Mammary epithelial cell (primary cell): ENCODE measurements at regions of chr17 and their contacts with region 1.

Region 1: DNA sequence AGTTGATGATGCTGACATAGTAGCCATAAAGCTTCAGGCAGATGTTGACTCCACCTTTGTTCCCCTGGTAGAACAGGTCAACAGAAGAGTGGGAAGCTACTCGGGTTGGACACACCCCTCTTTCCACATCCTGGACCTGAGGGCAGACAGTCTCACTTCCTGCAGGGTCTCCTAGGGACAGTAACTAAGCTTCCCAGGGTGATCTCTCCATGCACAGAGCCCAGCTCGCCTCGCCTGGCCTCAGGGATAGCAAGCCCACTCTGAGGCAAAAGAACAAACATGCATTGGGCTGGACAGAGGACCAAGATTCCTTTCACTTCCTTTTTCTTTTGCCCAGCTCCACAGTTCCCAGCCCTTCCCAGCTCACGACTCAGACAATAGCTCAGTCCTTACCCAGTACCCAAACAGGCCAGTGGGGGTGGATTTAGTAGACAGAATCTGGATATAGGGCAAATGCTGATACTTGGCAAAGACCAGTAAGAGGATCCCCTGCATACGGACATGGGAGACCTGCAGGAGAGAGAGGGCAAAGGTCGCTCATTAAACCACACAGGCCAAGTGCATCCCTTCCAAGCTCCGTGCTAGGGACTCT is 7.0 kb downstream of the INPP5K start:
- DNase-seq: no peak
- H3K4me3 ChIP-seq: no peak overlapping the region
- H3K27ac ChIP-seq: no peak overlapping the region
- H3K4me1 ChIP-seq: peaks cover 30% of the 10 kb centered on the region
- H3K27me3 ChIP-seq: no peaks in the 10 kb centered on the region
- CTCF ChIP-seq: no peak

Region 2: GRCh38 chr17:1298606-1299005 is 210.8 kb before region 1 on chr17:
- CTCF ChIA-PET with region 1: no interaction called
- dilution Hi-C with region 1: loop called (anchors 5 kb)
- in situ Hi-C with region 1: no loop called
- intact Hi-C with region 1: no loop called
- DNase-seq: no peak
- H3K4me3 ChIP-seq: no peak overlapping the region
- H3K27ac ChIP-seq: no peak overlapping the region
- H3K4me1 ChIP-seq: no peaks in the 10 kb centered on the region
- H3K27me3 ChIP-seq: peaks cover 13% of the 10 kb centered on the region
- CTCF ChIP-seq: no peak

Region 3: GRCh38 chr17:1379930-1380313 is 129.5 kb before region 1 on chr17:
- CTCF ChIA-PET with region 1: no interaction called
- dilution Hi-C with region 1: loop called (anchors 5 kb)
- in situ Hi-C with region 1: no loop called
- intact Hi-C with region 1: no loop called
- DNase-seq: peak; percentile 43
- H3K4me3 ChIP-seq: no peak overlapping the region
- H3K27ac ChIP-seq: no peak overlapping the region
- H3K4me1 ChIP-seq: peaks cover 6% of the 10 kb centered on the region
- H3K27me3 ChIP-seq: no peaks in the 10 kb centered on the region
- CTCF ChIP-seq: no peak

Region 4: DNA sequence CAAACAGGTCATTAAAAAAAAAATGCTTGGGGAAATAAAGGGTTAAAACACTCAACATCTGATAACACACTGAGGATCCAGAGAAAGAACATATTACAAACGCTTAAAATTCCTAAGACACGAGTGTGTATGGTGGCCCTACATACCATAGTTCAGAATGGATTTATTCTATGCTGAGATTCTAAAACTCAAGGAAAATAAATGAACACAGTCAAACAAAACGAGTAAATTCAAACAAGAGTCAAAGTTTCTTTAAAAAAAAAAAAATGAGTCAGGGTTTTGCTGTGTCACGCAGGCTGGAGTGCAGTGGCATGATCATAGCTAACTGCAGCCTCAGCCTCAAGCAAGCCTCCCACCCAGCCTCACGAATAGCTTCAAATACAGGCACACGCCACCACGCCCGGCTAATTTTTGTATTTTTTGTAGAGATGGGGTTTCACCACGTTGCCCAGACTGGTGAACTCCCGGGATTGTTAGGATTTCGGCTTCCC is 70.7 kb before region 1 on chr17:
- CTCF ChIA-PET with region 1: no interaction called
- dilution Hi-C with region 1: loop called (anchors 5 kb)
- in situ Hi-C with region 1: no loop called
- intact Hi-C with region 1: no loop called
- DNase-seq: no peak
- H3K4me3 ChIP-seq: no peak overlapping the region
- H3K27ac ChIP-seq: no peak overlapping the region
- H3K4me1 ChIP-seq: no peaks in the 10 kb centered on the region
- H3K27me3 ChIP-seq: no peaks in the 10 kb centered on the region
- CTCF ChIP-seq: no peak

Region 5: DNA sequence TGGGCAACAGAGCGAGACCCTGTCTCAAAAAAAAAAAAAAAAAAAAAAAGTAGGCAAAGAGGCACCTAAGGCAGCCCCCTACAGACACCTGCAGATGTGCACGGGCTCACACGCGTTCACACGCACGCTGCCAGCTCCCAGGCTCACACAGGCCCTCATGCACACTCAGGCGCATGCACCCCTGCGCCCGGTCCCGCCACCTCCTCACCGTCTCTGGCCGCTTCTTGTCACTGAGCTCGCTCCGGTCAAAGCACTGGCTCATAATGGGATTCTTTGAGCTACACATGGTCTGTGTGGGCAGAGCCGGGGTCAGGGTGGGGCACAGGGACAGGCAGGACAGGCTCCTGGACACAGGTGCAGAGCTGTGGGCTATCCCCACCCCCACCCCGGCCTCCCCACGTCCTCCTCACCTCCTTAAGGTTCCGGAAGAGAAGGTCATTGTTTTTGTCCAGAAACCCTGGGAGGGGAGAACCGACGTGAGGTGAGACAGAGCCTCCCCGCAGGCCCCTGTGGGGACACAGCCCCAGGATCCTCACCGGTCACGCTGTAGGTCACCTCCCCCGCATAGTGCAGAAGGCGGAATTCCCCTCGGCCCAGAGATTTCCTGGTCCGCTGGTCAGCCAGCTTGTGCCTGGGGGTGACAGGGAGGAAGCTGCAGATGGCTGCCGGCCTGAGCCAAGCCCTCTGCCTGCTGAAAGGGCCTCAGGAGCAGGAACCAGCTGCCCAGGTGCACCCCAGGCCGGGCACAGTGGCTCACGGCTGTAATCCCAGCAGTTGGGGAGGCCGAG is 34.8 kb before region 1 on chr17:
- CTCF ChIA-PET with region 1: no interaction called
- dilution Hi-C with region 1: loop called (anchors 5 kb)
- in situ Hi-C with region 1: no loop called
- intact Hi-C with region 1: no loop called
- DNase-seq: no peak
- H3K4me3 ChIP-seq: no peak overlapping the region
- H3K27ac ChIP-seq: no peak overlapping the region
- H3K4me1 ChIP-seq: no peaks in the 10 kb centered on the region
- H3K27me3 ChIP-seq: no peaks in the 10 kb centered on the region
- CTCF ChIP-seq: no peak

Region 6: GRCh38 chr17:1555651-1556471 is 46.5 kb after region 1 on chr17:
- CTCF ChIA-PET with region 1: no interaction called
- dilution Hi-C with region 1: loop called (anchors 5 kb)
- in situ Hi-C with region 1: no loop called
- intact Hi-C with region 1: no loop called
- DNase-seq: no peak
- H3K4me3 ChIP-seq: no peak overlapping the region
- H3K27ac ChIP-seq: no peak overlapping the region
- H3K4me1 ChIP-seq: peaks cover 9% of the 10 kb centered on the region
- H3K27me3 ChIP-seq: no peaks in the 10 kb centered on the region
- CTCF ChIP-seq: no peak